ENCODE measurements at regions of chr11 and their contacts with region 1.

Region 1: GRCh38 chr11:76698321-76699060 is 27.9 kb upstream of the LRRC32 start:
- DNase-seq: no peak
- ATAC-seq: no peak
- H3K4me3 ChIP-seq: no peak overlapping the region
- H3K4me3 Mint-ChIP-seq: no peak overlapping the region
- H3K27ac ChIP-seq: no peak overlapping the region
- H3K27ac Mint-ChIP-seq: no peak overlapping the region
- H3K4me1 ChIP-seq: no peaks in the 10 kb centered on the region
- H3K4me1 Mint-ChIP-seq: no peaks in the 10 kb centered on the region
- H3K27me3 ChIP-seq: no peaks in the 10 kb centered on the region
- H3K27me3 Mint-ChIP-seq: peaks cover 3% of the 10 kb centered on the region
- CTCF ChIP-seq: no peak

Region 2: DNA sequence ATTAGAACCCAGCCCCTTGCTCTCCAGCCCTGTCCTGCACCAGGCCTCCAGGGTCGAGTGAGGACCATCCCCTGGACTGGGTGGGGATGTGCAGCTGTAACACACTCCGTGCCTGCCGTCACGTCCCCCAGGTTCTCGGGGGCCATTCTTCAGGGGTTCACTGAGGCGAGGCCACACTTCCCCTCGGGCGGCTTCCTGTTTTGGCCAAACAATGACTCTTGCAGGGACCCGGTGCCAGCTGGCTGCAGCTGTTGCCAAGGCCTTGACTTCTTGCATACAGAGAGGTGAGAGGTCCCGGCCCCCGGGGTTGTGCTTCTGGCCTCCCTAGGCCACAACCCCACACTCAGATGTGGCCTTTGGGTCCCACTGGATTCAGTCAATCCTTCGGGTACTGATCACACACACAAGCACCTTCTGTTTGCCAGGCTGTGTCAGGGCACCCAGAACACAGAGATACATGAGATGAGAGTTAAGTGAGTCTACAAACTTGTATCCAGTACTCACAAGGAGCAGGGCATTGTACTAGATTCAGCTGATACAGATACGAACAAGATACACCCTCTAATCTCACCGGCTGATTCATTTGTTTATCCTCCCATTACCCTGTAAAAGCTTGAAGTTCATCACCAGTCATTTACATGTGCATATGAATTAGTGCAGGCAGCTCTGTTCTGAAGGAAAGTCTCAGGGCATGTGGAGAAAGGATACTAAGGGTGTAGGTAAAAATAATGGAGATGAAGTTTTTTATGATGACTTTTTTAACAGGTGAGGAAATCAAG is 60.8 kb before region 1 on chr11:
- CTCF ChIA-PET with region 1: no interaction called
- POLR2A ChIA-PET with region 1: no interaction called
- intact Hi-C with region 1: loop called in 1 of 2 experiments (anchors 10 kb)
- DNase-seq: peak in 2 of 9 experiments; percentile 32 to 40
- ATAC-seq: no peak
- H3K4me3 ChIP-seq: no peak overlapping the region
- H3K4me3 Mint-ChIP-seq: no peak overlapping the region
- H3K27ac ChIP-seq: no peak overlapping the region
- H3K27ac Mint-ChIP-seq: no peak overlapping the region
- H3K4me1 ChIP-seq: no peaks in the 10 kb centered on the region
- H3K4me1 Mint-ChIP-seq: peaks cover 4% of the 10 kb centered on the region
- H3K27me3 ChIP-seq: no peaks in the 10 kb centered on the region
- H3K27me3 Mint-ChIP-seq: peaks cover 28% of the 10 kb centered on the region
- CTCF ChIP-seq: no peak